A673 (cell line): ENCODE measurements at regions of chr6 and their contacts with region 1.

Region 1: GRCh38 chr6:34055223-34055933 is 90.5 kb downstream of the GRM4 start:
- DNase-seq: peak; percentile 83
- H3K4me3 ChIP-seq: no peak overlapping the region
- H3K27ac ChIP-seq: no peak overlapping the region
- H3K4me1 ChIP-seq: no peaks in the 10 kb centered on the region
- H3K27me3 ChIP-seq: no peaks in the 10 kb centered on the region
- CTCF ChIP-seq: peak; percentile 93

Region 2: GRCh38 chr6:33744001-33744848 is 311.2 kb before region 1 on chr6:
- CTCF ChIA-PET with region 1: no interaction called
- POLR2A ChIA-PET with region 1: no interaction called
- intact Hi-C with region 1: loop called (anchors 10 kb)
- DNase-seq: peak; percentile 85
- H3K4me3 ChIP-seq: no peak overlapping the region
- H3K27ac ChIP-seq: no peak overlapping the region
- H3K4me1 ChIP-seq: peaks cover 22% of the 10 kb centered on the region
- H3K27me3 ChIP-seq: no peaks in the 10 kb centered on the region
- CTCF ChIP-seq: peak; percentile 97

Region 3: GRCh38 chr6:34067814-34068213 is 12.4 kb after region 1 on chr6:
- CTCF ChIA-PET with region 1: interaction called, 10 read pairs
- POLR2A ChIA-PET with region 1: no interaction called
- intact Hi-C with region 1: no loop called
- DNase-seq: peak; percentile 43
- H3K4me3 ChIP-seq: no peak overlapping the region
- H3K27ac ChIP-seq: no peak overlapping the region
- H3K4me1 ChIP-seq: no peaks in the 10 kb centered on the region
- H3K27me3 ChIP-seq: peaks cover 8% of the 10 kb centered on the region
- CTCF ChIP-seq: peak; percentile 49

Region 4: GRCh38 chr6:34115403-34115795 is 60.0 kb after region 1 on chr6:
- CTCF ChIA-PET with region 1: interaction called, 12 read pairs
- POLR2A ChIA-PET with region 1: no interaction called
- intact Hi-C with region 1: no loop called
- DNase-seq: peak; percentile 30
- H3K4me3 ChIP-seq: no peak overlapping the region
- H3K27ac ChIP-seq: no peak overlapping the region
- H3K4me1 ChIP-seq: no peaks in the 10 kb centered on the region
- H3K27me3 ChIP-seq: peaks cover 58% of the 10 kb centered on the region
- CTCF ChIP-seq: no peak

Region 5: DNA sequence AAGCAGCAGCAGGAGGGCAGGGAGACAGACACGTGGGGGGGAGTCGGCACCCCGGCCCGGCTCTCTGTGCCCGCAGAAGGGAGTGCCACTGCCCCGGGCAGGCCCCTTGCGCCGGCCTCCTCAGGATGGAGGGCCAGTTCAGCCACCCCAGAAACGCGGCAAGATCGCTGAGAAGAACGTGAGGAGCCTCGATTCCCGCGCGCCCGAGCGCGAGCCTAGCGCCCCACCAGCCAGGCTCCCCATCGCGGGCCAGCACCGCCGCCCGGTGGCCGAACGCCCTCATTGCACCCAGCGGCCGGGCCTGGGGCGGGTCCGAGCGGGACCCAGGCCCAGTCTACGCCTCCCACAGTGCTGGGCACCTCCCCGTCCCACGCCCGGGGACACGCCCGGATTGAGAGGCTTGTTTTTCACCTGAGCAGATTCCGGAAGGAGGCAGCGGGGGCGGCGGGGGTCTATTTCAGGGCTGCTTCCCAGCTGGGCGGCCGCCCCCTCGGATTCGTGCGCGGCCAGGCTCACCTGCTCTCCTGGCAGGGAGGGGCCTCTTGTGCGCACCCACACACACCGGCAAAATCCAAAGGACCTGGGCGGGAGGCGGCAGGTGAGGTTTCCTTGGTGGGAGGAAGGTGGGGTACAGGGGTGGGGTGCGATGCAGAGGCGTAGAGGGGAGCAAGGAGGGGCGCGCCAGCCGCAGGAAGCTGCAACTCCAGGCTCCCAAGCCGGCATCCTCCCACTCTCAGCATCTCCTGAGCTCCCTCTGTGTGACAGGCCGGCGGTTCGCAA is 99.5 kb after region 1 on chr6:
- CTCF ChIA-PET with region 1: interaction called, 10 read pairs
- POLR2A ChIA-PET with region 1: no interaction called
- intact Hi-C with region 1: loop called (anchors 1 kb)
- DNase-seq: peak; percentile 77
- H3K4me3 ChIP-seq: peak overlapping the region; percentile 24
- H3K27ac ChIP-seq: no peak overlapping the region
- H3K4me1 ChIP-seq: peaks cover 6% of the 10 kb centered on the region
- H3K27me3 ChIP-seq: peaks cover 5% of the 10 kb centered on the region
- CTCF ChIP-seq: peak; percentile 90